IMR-90 (cell line): ENCODE measurements at regions of chr17 and their contacts with region 1.

Region 1: DNA sequence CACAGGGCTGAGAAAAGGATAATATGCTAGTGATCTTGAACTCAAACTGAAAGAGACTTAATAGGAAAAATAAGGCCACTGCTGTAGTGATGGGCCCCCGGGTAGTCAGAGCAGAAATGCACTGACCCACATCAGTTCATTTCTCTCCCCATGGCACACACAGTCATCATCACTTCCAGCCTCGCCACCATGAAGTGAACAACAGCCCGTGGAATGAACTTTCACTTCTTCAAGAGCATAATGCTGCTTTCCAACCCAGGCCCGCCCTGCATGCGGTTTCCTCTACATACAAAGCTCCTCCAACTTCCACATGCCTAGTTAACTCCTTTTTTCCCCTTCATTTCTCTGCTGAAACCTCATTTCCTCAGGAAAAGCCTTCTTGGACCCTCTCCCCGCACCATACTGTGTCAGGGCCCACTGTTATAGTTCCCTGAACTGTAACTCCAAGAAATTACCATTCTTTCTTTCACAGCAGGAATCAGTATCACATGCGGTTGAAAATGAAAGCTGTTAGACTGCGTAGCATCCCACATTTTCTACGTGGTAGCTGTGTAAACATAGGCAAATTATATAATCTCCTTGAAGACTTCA is 65.8 kb upstream of the SMIM36 start:
- DNase-seq: peak; percentile 84
- ATAC-seq: peak; percentile 81
- H3K4me3 ChIP-seq: peak overlapping the region; percentile 20; the same call in 1 of the 2 replicates
- H3K27ac ChIP-seq: peak overlapping the region; percentile 94
- H3K4me1 ChIP-seq: peaks cover 9% of the 10 kb centered on the region
- H3K27me3 ChIP-seq: no peaks in the 10 kb centered on the region
- CTCF ChIP-seq: no peak
- POLR2A ChIP-seq: no peak
- RAD21 ChIP-seq: no peak

Region 2: GRCh38 chr17:55161935-55162555 is 415.0 kb before region 1 on chr17:
- CTCF ChIA-PET with region 1: no interaction called
- POLR2A ChIA-PET with region 1: no interaction called
- dilution Hi-C with region 1: no loop called
- in situ Hi-C with region 1: no loop called
- intact Hi-C with region 1: no loop called
- DNase-seq: peak; percentile 95
- ATAC-seq: peak; percentile 86
- H3K4me3 ChIP-seq: no peak overlapping the region
- H3K27ac ChIP-seq: no peak overlapping the region
- H3K4me1 ChIP-seq: peaks cover 4% of the 10 kb centered on the region
- H3K27me3 ChIP-seq: no peaks in the 10 kb centered on the region
- CTCF ChIP-seq: no peak
- POLR2A ChIP-seq: no peak
- RAD21 ChIP-seq: no peak

Region 3: DNA sequence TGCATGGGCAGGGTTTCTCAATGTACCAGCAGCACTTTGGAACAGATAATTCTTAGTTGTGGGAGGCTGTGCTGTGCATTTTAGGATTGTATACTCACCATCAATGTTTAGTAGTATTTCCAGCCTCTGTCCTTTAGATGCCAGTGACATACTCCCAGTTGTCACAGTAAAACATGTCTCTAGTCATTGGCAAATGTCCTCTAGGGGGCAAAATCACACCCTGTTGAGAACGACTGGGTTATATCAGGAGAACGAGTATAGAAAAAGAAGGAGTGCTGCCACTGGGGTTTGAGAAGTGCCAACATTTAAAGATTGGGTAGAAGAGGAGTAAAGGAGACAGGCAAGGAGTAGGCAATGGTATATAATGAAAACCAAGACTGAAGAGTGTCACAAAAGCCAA is 28.0 kb before region 1 on chr17:
- CTCF ChIA-PET with region 1: interaction called, 3 read pairs
- POLR2A ChIA-PET with region 1: interaction called, 10 read pairs
- dilution Hi-C with region 1: no loop called
- in situ Hi-C with region 1: no loop called
- intact Hi-C with region 1: no loop called
- DNase-seq: no peak
- ATAC-seq: no peak
- H3K4me3 ChIP-seq: no peak overlapping the region
- H3K27ac ChIP-seq: no peak overlapping the region
- H3K4me1 ChIP-seq: no peaks in the 10 kb centered on the region
- H3K27me3 ChIP-seq: peaks cover 3% of the 10 kb centered on the region; the same call in 1 of the 2 replicates
- CTCF ChIP-seq: no peak
- POLR2A ChIP-seq: no peak
- RAD21 ChIP-seq: 0 out of 2 replicates have a peak, but pooled peaks have one; percentile 14

Region 4: GRCh38 chr17:55652114-55652823 is 75.2 kb after region 1 on chr17:
- CTCF ChIA-PET with region 1: no interaction called
- POLR2A ChIA-PET with region 1: no interaction called
- dilution Hi-C with region 1: no loop called
- in situ Hi-C with region 1: no loop called
- intact Hi-C with region 1: no loop called
- DNase-seq: no peak
- ATAC-seq: no peak
- H3K4me3 ChIP-seq: no peak overlapping the region
- H3K27ac ChIP-seq: no peak overlapping the region
- H3K4me1 ChIP-seq: no peaks in the 10 kb centered on the region
- H3K27me3 ChIP-seq: no peaks in the 10 kb centered on the region; the same call in 1 of the 2 replicates
- CTCF ChIP-seq: no peak
- POLR2A ChIP-seq: no peak
- RAD21 ChIP-seq: no peak